ENCODE measurements at regions of chr7 and their contacts with region 1.

Region 1: GRCh38 chr7:76179686-76180085 is 22.0 kb upstream of the SRRM3 start:
- ATAC-seq: no peak
- H3K4me3 ChIP-seq: no peak overlapping the region
- H3K27ac ChIP-seq: no peak overlapping the region
- H3K4me1 ChIP-seq: peaks cover 0 to 2% of the 10 kb centered on the region in 2 donors

Region 2: GRCh38 chr7:76278540-76278939 is 98.9 kb after region 1 on chr7:
- in situ Hi-C with region 1: loop called in 2 of 9 experiments (anchors 10 to 25 kb)
- ATAC-seq: peak in 2 of 8 experiments; percentile 13 to 45
- H3K4me3 ChIP-seq: no peak overlapping the region
- H3K27ac ChIP-seq: no peak overlapping the region
- H3K4me1 ChIP-seq: peaks cover 1 to 5% of the 10 kb centered on the region in 2 donors

Region 3: GRCh38 chr7:76314042-76314721 is 134.5 kb after region 1 on chr7:
- in situ Hi-C with region 1: loop called in 2 of 9 experiments (anchors 10 to 25 kb)
- ATAC-seq: peak; percentile 11 to 50 (median 24)
- H3K4me3 ChIP-seq: no peak overlapping the region
- H3K27ac ChIP-seq: no peak overlapping the region
- H3K4me1 ChIP-seq: peaks cover 11 to 21% of the 10 kb centered on the region in 2 donors

Region 4: GRCh38 chr7:76393116-76394031 is 213.7 kb after region 1 on chr7:
- in situ Hi-C with region 1: no loop called
- ATAC-seq: peak; percentile 79 to 88 (median 86)
- H3K4me3 ChIP-seq: peak overlapping the region; percentile 45 to 52 (median 50)
- H3K27ac ChIP-seq: peak overlapping the region; percentile 66 to 67
- H3K4me1 ChIP-seq: peaks cover 11 to 32% of the 10 kb centered on the region in 2 donors

Measured in motor neuron (in vitro differentiated cells).